ENCODE measurements at regions of chr22 and their contacts with region 1.

Region 1: GRCh38 chr22:29040385-29041275 is 21.0 kb downstream of the C22orf31 start:
- DNase-seq: peak; percentile 36
- ATAC-seq: peak; percentile 92
- H3K4me3 ChIP-seq: no peak overlapping the region
- H3K27ac ChIP-seq: no peak overlapping the region
- H3K4me1 ChIP-seq: no peaks in the 10 kb centered on the region
- H3K27me3 ChIP-seq: no peaks in the 10 kb centered on the region
- CTCF ChIP-seq: peak; percentile 92 to 98 (median 94)
- EP300 ChIP-seq: no peak
- POLR2A ChIP-seq: no peak
- RAD21 ChIP-seq: peak; percentile 97

Region 2: DNA sequence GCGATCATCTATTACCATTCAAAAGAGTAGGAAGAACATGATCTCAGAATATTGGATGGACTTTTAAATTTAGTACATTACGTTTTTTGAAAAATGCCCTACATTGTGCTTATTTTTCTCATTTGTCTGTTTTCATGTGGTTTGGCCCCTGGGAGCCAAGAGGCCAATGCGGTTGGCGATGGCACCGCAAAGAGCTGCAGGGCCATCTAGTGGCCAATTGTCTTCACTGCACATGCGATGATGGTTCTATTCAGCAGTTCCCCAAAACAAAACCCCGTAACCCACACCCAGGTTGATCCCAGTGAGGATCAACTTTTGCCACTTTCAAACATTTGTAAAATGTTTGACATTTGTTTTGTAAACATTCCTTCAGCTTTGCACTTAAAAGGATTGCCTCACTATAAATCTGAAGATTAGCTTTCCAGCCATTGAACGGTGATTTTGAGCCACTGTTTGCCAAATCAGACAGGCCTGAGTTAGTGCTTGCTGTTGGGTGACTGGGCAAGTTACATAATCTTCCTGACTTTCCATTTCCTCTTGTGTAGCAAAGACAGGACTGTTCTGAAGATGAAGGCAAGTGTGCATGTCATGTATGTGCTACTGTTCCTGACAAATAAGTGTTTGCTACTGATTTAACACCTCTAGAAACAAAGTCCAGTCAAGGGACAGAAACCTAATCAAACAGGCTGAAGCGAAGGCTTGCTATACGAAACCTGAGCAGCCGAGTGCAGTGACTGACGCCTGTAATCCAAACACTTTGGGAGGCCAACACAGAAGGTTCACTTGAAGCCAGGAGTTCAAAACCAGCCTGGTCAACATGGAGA is 211.1 kb before region 1 on chr22:
- CTCF ChIA-PET with region 1: interaction called, 41 read pairs
- POLR2A ChIA-PET with region 1: no interaction called
- RAD21 ChIA-PET with region 1: interaction called, 11 read pairs
- SMC1A ChIA-PET with region 1: interaction called, 96 read pairs
- in situ Hi-C with region 1: no loop called
- intact Hi-C with region 1: no loop called
- DNase-seq: no peak
- ATAC-seq: peak; percentile 90
- H3K4me3 ChIP-seq: no peak overlapping the region
- H3K27ac ChIP-seq: no peak overlapping the region
- H3K4me1 ChIP-seq: peaks cover 4% of the 10 kb centered on the region
- H3K27me3 ChIP-seq: no peaks in the 10 kb centered on the region
- CTCF ChIP-seq: peak; percentile 96 to 98 (median 96)
- EP300 ChIP-seq: no peak
- POLR2A ChIP-seq: no peak
- RAD21 ChIP-seq: peak; percentile 99

Region 3: DNA sequence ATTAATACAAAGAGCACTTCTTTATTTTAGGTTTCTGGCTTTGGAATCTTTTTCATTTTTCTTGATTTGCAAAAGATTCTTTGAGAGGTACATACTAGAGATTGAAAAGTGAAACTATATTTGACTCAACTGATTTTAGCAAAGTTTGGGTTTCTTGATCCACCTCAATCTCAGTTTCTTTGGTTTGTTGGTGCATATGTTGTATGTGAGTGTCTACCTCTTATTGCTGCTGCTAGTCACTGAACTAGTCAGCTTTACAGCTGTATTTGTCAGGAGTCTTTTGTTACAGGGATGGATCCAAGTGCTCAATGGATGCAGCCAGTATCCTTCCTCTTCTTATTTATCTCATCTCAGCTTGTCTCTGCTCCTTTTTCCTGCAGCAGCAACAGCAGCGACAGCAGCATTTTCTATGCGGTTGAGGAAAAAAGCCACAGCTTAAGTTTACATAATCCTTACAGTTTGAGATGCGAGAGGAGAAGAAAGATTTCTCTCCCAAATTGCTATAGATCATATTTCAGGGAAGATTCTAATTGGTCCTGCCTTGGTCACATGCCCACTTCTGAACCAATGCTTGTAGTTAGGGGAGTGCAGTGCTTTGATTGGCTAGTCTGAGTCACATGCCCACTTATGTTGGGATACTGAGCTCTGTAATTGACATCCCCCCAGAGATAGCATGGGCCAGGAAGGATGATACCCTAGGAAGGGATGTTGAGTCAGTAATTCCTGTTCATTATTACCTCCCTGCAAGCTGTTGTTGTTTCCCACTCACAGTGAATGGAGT is 167.3 kb before region 1 on chr22:
- CTCF ChIA-PET with region 1: interaction called, 13 read pairs
- POLR2A ChIA-PET with region 1: interaction called, 3 read pairs
- RAD21 ChIA-PET with region 1: interaction called, 6 read pairs
- SMC1A ChIA-PET with region 1: interaction called, 4 read pairs
- in situ Hi-C with region 1: no loop called
- intact Hi-C with region 1: no loop called
- DNase-seq: no peak
- ATAC-seq: no peak
- H3K4me3 ChIP-seq: no peak overlapping the region
- H3K27ac ChIP-seq: no peak overlapping the region
- H3K4me1 ChIP-seq: no peaks in the 10 kb centered on the region
- H3K27me3 ChIP-seq: no peaks in the 10 kb centered on the region
- CTCF ChIP-seq: no peak
- EP300 ChIP-seq: no peak
- POLR2A ChIP-seq: no peak
- RAD21 ChIP-seq: no peak

Region 4: GRCh38 chr22:28935713-28936112 is 104.9 kb before region 1 on chr22:
- CTCF ChIA-PET with region 1: interaction called, 56 read pairs
- POLR2A ChIA-PET with region 1: no interaction called
- RAD21 ChIA-PET with region 1: interaction called, 38 read pairs
- SMC1A ChIA-PET with region 1: interaction called, 15 read pairs
- in situ Hi-C with region 1: no loop called
- intact Hi-C with region 1: no loop called
- DNase-seq: no peak
- ATAC-seq: peak; percentile 35; the same call in 2 of the 3 replicates
- H3K4me3 ChIP-seq: no peak overlapping the region
- H3K27ac ChIP-seq: no peak overlapping the region
- H3K4me1 ChIP-seq: no peaks in the 10 kb centered on the region; the same call in 1 of the 2 replicates
- H3K27me3 ChIP-seq: peaks cover 0 to 2% of the 10 kb centered on the region in 2 experiments; a peak in 1 of 4 replicates
- CTCF ChIP-seq: peak in 2 of 3 experiments; percentile 24 to 30; a peak in 2 of 6 replicates
- EP300 ChIP-seq: no peak
- POLR2A ChIP-seq: no peak
- RAD21 ChIP-seq: no peak

Region 5: GRCh38 chr22:29011240-29012100 is 29.2 kb before region 1 on chr22:
- CTCF ChIA-PET with region 1: interaction called, 35 read pairs
- POLR2A ChIA-PET with region 1: interaction called, 3 read pairs
- RAD21 ChIA-PET with region 1: interaction called, 25 read pairs
- SMC1A ChIA-PET with region 1: interaction called, 44 read pairs
- in situ Hi-C with region 1: no loop called
- intact Hi-C with region 1: no loop called
- DNase-seq: no peak
- ATAC-seq: no peak
- H3K4me3 ChIP-seq: no peak overlapping the region
- H3K27ac ChIP-seq: no peak overlapping the region
- H3K4me1 ChIP-seq: no peaks in the 10 kb centered on the region
- H3K27me3 ChIP-seq: 0 out of 4 replicates have a peak, but pooled peaks cover 0 to 2% of the 10 kb centered on the region in 2 experiments
- CTCF ChIP-seq: no peak
- EP300 ChIP-seq: no peak
- POLR2A ChIP-seq: no peak
- RAD21 ChIP-seq: no peak

Region 6: GRCh38 chr22:29128891-29129807 is 88.5 kb after region 1 on chr22:
- CTCF ChIA-PET with region 1: no interaction called
- POLR2A ChIA-PET with region 1: no interaction called
- RAD21 ChIA-PET with region 1: no interaction called
- SMC1A ChIA-PET with region 1: no interaction called
- in situ Hi-C with region 1: no loop called
- intact Hi-C with region 1: no loop called
- DNase-seq: no peak
- ATAC-seq: no peak
- H3K4me3 ChIP-seq: no peak overlapping the region
- H3K27ac ChIP-seq: no peak overlapping the region
- H3K4me1 ChIP-seq: no peaks in the 10 kb centered on the region
- H3K27me3 ChIP-seq: no peaks in the 10 kb centered on the region
- CTCF ChIP-seq: no peak
- EP300 ChIP-seq: no peak
- POLR2A ChIP-seq: no peak
- RAD21 ChIP-seq: no peak

Region 7: GRCh38 chr22:29245637-29246385 is 205.2 kb after region 1 on chr22:
- CTCF ChIA-PET with region 1: interaction called, 28 read pairs
- POLR2A ChIA-PET with region 1: no interaction called
- RAD21 ChIA-PET with region 1: interaction called, 15 read pairs
- SMC1A ChIA-PET with region 1: interaction called, 19 read pairs
- in situ Hi-C with region 1: no loop called
- intact Hi-C with region 1: loop called (anchors 1 kb)
- DNase-seq: no peak
- ATAC-seq: peak; percentile 96
- H3K4me3 ChIP-seq: no peak overlapping the region
- H3K27ac ChIP-seq: no peak overlapping the region
- H3K4me1 ChIP-seq: no peaks in the 10 kb centered on the region
- H3K27me3 ChIP-seq: no peaks in the 10 kb centered on the region
- CTCF ChIP-seq: peak; percentile 92 to 98 (median 96)
- EP300 ChIP-seq: no peak
- POLR2A ChIP-seq: no peak
- RAD21 ChIP-seq: peak; percentile 95

Region 8: DNA sequence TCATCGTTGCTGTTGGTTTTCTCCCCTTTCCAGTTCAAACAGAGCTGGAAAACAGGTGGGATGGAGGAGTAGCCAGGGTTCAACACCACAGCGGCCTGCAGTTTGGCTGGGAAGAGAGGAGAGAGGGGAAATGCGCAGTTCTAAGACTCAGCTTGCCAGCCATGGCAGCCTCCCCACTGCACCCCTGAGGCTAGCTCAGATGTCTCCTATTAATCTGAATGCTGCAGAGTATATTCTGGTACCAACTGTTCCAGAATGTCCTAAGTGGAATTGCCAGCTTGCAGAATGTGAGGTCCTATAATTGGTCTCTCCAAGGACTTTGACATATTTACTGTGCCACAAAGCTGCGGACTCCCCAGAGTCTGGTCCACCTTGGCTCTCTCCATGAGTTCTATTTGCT is 471.4 kb after region 1 on chr22:
- CTCF ChIA-PET with region 1: no interaction called
- POLR2A ChIA-PET with region 1: no interaction called
- RAD21 ChIA-PET with region 1: no interaction called
- SMC1A ChIA-PET with region 1: no interaction called
- in situ Hi-C with region 1: no loop called
- intact Hi-C with region 1: no loop called
- DNase-seq: no peak
- ATAC-seq: no peak
- H3K4me3 ChIP-seq: no peak overlapping the region
- H3K27ac ChIP-seq: no peak overlapping the region
- H3K4me1 ChIP-seq: no peaks in the 10 kb centered on the region
- H3K27me3 ChIP-seq: no peaks in the 10 kb centered on the region
- CTCF ChIP-seq: no peak
- EP300 ChIP-seq: no peak
- POLR2A ChIP-seq: no peak
- RAD21 ChIP-seq: no peak